Posterior cingulate gyrus (tissue), 11 donors: ENCODE measurements at regions of chr5 and their contacts with region 1.

Region 1: GRCh38 chr5:6583049-6583880 is 49.6 kb downstream of the NSUN2 start:
- DNase-seq: peak in 7 of 10 donors; percentile 50 to 94 (median 58)

Region 2: GRCh38 chr5:6377905-6378765 is 205.1 kb before region 1 on chr5 and contains the start of gene MED10:
- intact Hi-C with region 1: loop called (anchors 10 kb)
- DNase-seq: peak; percentile 85 to 99 (median 92)

Region 3: GRCh38 chr5:6737023-6737941 is 154.0 kb after region 1 on chr5:
- intact Hi-C with region 1: no loop called
- DNase-seq: peak in 1 of 10 donors; percentile 61

Region 4: GRCh38 chr5:6950860-6951259 is 367.6 kb after region 1 on chr5:
- intact Hi-C with region 1: no loop called
- DNase-seq: no peak